A549 (cell line): ENCODE measurements at regions of chr2 and their contacts with region 1.

Region 1: DNA sequence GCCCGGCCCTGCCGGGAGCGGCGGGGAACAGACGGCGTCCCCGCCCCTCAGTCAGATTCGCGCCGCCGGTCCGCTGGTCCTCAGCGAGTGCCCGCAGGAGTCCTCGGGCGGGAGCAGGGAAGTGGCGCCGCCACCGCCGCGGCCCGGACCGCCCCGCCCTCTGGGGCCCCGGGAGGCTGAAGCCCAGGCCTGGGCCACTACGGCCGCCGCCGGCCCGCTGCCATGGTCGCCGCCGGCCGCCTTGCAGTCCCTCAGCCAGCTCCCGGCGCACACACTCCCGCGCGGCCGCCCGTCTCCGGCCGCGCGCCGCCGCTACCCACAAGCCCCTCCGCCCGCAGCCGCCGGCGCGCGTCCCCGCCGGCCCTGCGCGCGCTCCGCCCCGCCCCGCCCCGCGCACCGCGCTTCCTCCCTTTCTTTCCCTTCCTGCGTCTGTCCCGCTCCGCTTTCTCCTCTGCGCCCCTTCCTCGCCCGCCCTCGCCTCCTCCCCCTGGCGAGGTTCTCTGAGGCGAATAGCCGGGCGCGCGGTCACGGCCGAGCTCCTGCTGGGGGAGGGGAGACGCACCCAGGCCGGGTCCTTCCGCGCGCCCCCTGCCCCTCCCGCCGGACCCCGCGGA is at the start of gene ROCK2:
- DNase-seq: peak; percentile 79 to 91
- ATAC-seq: peak; percentile 71 to 72
- H3K4me3 ChIP-seq: peak within 1 kb of the TSS; percentile 92
- H3K27ac ChIP-seq: peak within 1 kb of the TSS; percentile 94 to 95
- H3K4me1 ChIP-seq: peaks cover 45% of the 10 kb centered on the region
- CTCF ChIP-seq: no peak
- EP300 ChIP-seq: no peak
- POLR2A ChIP-seq: peak; percentile 43
- RAD21 ChIP-seq: peak in 1 of 2 experiments; percentile 16; a peak in 1 of 5 replicates
- polyA plus RNA-seq, gene ROCK2: 33.4 and 38.7 TPM in 2 replicates

Region 2: DNA sequence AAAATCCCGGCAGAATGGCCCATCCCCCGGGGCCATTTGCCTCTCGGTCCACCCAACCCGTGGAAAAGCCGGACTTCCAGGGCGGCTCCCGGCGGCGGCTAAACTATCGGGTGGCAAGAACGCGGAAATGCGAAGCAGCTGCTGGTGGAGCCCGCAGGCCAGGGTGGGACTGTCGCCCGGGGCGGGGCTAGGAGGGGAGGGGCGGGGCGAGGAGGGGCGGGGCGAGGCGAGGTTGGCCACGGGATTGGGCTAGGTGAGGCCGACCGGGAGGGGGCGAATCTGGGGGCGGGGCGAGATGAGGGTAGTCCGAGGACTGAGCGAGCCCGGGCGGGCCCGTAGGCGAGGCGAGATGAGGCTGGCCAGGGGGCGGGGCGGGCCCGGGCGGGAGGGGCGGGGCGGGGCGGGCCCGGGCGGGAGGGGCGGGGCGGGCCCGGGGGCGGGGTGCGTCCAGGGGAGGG is 189.5 kb before region 1 on chr2:
- CTCF ChIA-PET with region 1: no interaction called
- POLR2A ChIA-PET with region 1: interaction called, 11 read pairs
- DNase-seq: peak; percentile 97 to 99
- ATAC-seq: peak; percentile 84 to 85
- H3K4me3 ChIP-seq: peak overlapping the region; percentile 72
- H3K27ac ChIP-seq: peak overlapping the region; percentile 87 to 90
- H3K4me1 ChIP-seq: peaks cover 14% of the 10 kb centered on the region
- CTCF ChIP-seq: no peak
- EP300 ChIP-seq: no peak
- POLR2A ChIP-seq: peak; percentile 78
- RAD21 ChIP-seq: peak in 1 of 2 experiments; percentile 13; a peak in 1 of 5 replicates

Region 3: GRCh38 chr2:11242542-11243174 is 101.8 kb before region 1 on chr2:
- CTCF ChIA-PET with region 1: no interaction called
- POLR2A ChIA-PET with region 1: no interaction called
- DNase-seq: no peak
- ATAC-seq: peak in 1 of 2 experiments; percentile 35; a peak in 1 of 6 replicates
- H3K4me3 ChIP-seq: no peak overlapping the region
- H3K27ac ChIP-seq: no peak overlapping the region
- H3K4me1 ChIP-seq: peaks cover 38% of the 10 kb centered on the region
- CTCF ChIP-seq: no peak
- EP300 ChIP-seq: no peak
- POLR2A ChIP-seq: no peak
- RAD21 ChIP-seq: no peak

Region 4: GRCh38 chr2:11377928-11378545 is 33.6 kb after region 1 on chr2:
- CTCF ChIA-PET with region 1: interaction called, 10 read pairs
- POLR2A ChIA-PET with region 1: interaction called, 57 read pairs
- DNase-seq: no peak
- ATAC-seq: no peak
- H3K4me3 ChIP-seq: no peak overlapping the region
- H3K27ac ChIP-seq: peak overlapping the region in 1 of 2 experiments; percentile 50; a peak in 4 of 6 replicates
- H3K4me1 ChIP-seq: peaks cover 40% of the 10 kb centered on the region
- CTCF ChIP-seq: no peak
- EP300 ChIP-seq: no peak
- POLR2A ChIP-seq: no peak
- RAD21 ChIP-seq: no peak

Region 5: GRCh38 chr2:11389551-11390528 is 45.4 kb after region 1 on chr2:
- CTCF ChIA-PET with region 1: interaction called, 14 read pairs
- POLR2A ChIA-PET with region 1: interaction called, 82 read pairs
- DNase-seq: peak; percentile 98 to 99
- ATAC-seq: peak; percentile 82 to 86
- H3K4me3 ChIP-seq: no peak overlapping the region
- H3K27ac ChIP-seq: peak overlapping the region; percentile 86 to 92
- H3K4me1 ChIP-seq: peaks cover 89% of the 10 kb centered on the region
- CTCF ChIP-seq: no peak
- EP300 ChIP-seq: peak; percentile 94 to 97
- POLR2A ChIP-seq: no peak
- RAD21 ChIP-seq: peak; percentile 0 to 37; a peak in 3 of 5 replicates